ENCODE measurements at regions of chr1 and their contacts with region 1.

Region 1: DNA sequence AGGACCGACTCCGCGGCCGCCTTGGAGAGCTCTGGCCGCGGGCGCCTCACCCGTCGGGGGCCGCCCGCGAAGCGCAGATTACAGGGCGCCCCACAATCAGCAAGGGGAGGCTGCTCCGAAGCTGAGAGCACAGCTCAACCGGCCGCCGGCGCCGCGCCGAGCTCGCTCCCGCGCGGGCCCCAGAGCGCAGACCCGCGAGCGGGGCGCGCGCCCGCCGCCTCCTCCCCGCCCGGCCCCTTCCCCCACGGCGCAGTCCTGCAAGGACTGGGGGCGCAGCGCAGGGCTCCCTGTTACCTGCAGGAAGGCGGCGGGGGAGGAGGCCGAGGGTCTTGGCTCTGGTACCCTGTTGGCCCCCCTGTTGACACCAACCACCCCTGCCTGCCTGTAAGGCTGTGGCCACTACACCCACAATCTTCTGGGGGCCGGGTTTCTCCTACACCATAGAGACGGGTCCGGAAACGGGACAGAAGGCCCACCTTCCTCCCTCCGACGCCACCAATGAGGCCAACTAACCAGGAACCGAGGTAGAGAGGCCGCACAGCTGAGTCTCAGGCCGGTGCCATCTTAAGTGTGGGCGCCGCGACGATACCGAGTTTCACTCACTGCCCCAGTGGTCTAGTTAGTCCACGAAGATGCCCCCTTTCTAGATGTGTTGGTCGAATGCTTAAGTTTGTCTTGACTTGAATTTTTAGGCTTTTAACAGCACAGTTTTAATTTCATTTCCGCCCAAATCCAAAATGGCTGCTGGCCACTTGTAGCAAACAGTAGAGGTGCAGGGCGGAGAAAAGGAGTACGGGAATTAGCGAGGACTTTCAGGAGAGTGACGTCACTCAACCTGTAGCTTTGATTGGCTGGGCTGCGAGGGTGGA is at the start of gene SCYL3:
- DNase-seq: peak; percentile 86
- H3K4me3 Mint-ChIP-seq: peak within 1 kb of the TSS; percentile 86
- H3K27ac Mint-ChIP-seq: peak within 1 kb of the TSS; percentile 100
- H3K4me1 Mint-ChIP-seq: peaks cover 51% of the 10 kb centered on the region
- H3K27me3 Mint-ChIP-seq: peaks cover 12% of the 10 kb centered on the region
- total RNA-seq, gene SCYL3: 11.8 and 12.3 TPM in 2 replicates

Region 2: DNA sequence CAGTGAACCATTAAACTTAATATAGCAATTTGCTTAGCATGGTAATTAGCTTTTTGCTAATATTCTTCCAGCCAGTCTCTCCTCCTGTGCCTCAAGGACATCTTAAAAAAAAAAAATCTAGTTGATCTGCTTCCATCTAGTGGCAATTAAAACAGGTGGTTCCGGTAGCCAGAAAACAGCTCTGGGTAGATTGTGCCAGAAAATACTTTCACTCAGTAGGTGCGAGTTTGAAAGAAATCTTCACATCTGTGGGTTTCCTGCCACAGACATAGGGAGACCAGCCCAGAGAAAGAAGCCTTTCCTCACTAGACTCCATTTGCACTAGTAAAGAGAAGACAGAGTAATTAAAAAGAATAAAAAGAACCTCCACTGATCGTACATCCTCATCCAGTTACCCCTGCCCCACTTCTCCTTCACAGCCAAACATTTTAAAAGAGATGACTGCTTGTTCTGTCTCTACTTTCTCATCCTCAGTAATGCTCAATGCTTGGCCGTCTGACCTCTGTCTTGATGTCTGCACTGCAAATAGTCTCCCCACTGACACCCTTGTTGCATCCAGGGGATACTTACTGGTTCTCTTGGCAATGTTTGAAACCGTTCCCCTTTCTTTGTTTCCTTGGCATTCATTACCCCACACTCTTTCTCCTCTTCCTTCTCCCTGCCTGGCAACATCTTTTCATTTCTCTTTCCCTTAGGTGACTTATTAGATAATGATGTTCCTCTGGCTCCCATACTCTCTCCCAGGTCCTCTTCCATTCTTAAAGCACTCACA is 199.2 kb before region 1 on chr1:
- intact Hi-C with region 1: loop called (anchors 5 kb)
- DNase-seq: peak; percentile 56
- H3K4me3 Mint-ChIP-seq: peak overlapping the region; percentile 28
- H3K27ac Mint-ChIP-seq: peak overlapping the region; percentile 90
- H3K4me1 Mint-ChIP-seq: peaks cover 96% of the 10 kb centered on the region
- H3K27me3 Mint-ChIP-seq: no peaks in the 10 kb centered on the region

Region 3: GRCh38 chr1:169776440-169776839 is 117.3 kb before region 1 on chr1:
- intact Hi-C with region 1: no loop called
- DNase-seq: no peak
- H3K4me3 Mint-ChIP-seq: no peak overlapping the region
- H3K27ac Mint-ChIP-seq: no peak overlapping the region
- H3K4me1 Mint-ChIP-seq: no peaks in the 10 kb centered on the region
- H3K27me3 Mint-ChIP-seq: peaks cover 8% of the 10 kb centered on the region

Region 4: DNA sequence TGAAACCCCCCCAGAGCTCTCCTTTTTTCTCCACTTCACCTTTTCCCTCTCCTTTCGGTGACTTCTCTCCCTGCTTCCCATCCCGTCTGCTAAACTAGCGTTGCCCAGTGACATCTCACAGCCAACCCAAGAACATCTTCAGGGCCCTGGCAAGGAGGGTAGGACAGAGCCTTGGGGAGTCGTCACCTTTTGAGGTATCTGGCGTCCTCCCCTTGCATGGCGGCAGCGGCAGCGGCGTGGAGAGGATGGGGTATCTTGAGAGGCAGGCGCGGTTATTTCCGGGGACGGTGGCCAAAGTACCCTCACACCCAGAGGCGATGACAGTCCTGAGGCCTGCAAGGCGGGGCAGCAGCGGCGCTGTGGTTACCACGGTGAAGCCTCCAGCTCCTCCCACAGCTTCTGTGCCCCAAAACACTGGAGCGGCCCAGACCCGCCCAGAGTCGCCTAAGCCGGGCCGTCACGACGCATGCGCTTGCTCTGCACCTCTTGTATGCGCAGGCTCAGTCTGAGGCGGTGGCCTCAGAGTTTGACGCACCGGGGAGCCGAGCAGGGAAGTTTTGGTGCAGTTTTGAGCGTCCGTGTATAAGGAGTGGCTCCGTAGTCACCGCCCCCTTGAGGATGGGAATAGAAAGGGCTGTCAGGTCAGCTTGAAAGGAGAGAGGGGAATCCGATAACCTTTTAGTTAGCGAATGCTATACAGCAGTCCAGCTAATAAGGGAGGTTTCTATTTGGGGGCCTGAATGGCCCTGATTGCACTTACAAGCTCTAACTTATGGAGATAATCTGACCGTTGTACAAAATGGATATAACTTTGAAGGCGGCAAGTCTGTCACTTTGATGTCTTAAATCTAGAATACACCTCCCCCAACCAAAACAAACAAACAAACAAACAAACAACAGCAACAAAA is 180.8 kb after region 1 on chr1 and contains the start of gene KIFAP3:
- intact Hi-C with region 1: loop called (anchors 1 kb)
- DNase-seq: peak; percentile 95
- H3K4me3 Mint-ChIP-seq: peak within 1 kb of the TSS; percentile 95
- H3K27ac Mint-ChIP-seq: peak within 1 kb of the TSS; percentile 96
- H3K4me1 Mint-ChIP-seq: peaks cover 45% of the 10 kb centered on the region
- H3K27me3 Mint-ChIP-seq: no peaks in the 10 kb centered on the region
- total RNA-seq, gene KIFAP3: 12.9 and 13.5 TPM in 2 replicates

Region 5: GRCh38 chr1:170531758-170532657 is 638.3 kb after region 1 on chr1 and contains the start of gene GORAB:
- intact Hi-C with region 1: loop called (anchors 1 kb)
- DNase-seq: peak; percentile 82
- H3K4me3 Mint-ChIP-seq: no peak within 1 kb of the TSS
- H3K27ac Mint-ChIP-seq: no peak within 1 kb of the TSS
- H3K4me1 Mint-ChIP-seq: peaks cover 8% of the 10 kb centered on the region
- H3K27me3 Mint-ChIP-seq: peaks cover 4% of the 10 kb centered on the region
- total RNA-seq, gene GORAB: 11.8 and 12.2 TPM in 2 replicates

Region 6: GRCh38 chr1:170604065-170604464 is 710.3 kb after region 1 on chr1:
- intact Hi-C with region 1: no loop called
- DNase-seq: no peak
- H3K4me3 Mint-ChIP-seq: no peak overlapping the region
- H3K27ac Mint-ChIP-seq: no peak overlapping the region
- H3K4me1 Mint-ChIP-seq: no peaks in the 10 kb centered on the region
- H3K27me3 Mint-ChIP-seq: peaks cover 2% of the 10 kb centered on the region

Region 7: DNA sequence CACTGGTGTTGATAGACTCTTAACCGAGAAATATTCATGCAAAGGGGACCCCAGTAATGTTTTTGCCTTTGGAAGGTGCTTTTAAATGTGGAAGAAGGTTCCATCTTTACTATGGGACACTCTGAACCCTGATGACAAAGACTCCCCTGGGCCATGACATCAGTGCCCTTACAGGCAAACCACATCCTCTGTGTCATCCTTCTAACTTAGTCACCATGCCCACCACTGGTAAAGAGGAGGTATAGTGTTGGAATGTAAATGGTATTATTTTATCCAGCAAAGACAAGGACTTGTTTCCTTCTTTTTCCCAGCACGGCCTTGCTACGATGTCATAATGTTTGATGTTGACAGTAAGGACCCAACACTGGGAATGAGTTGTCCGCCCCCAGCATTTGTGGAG is 1900.4 kb after region 1 on chr1:
- intact Hi-C with region 1: loop called (anchors 5 kb)
- DNase-seq: peak; percentile 44
- H3K4me3 Mint-ChIP-seq: peak overlapping the region; percentile 66
- H3K27ac Mint-ChIP-seq: peak overlapping the region; percentile 93
- H3K4me1 Mint-ChIP-seq: peaks cover 47% of the 10 kb centered on the region
- H3K27me3 Mint-ChIP-seq: no peaks in the 10 kb centered on the region